PC-9 (cell line): ENCODE measurements at regions of chr12 and their contacts with region 1.

Region 1: GRCh38 chr12:120971299-120972179 is 6.8 kb upstream of the HNF1A start:
- DNase-seq: peak; percentile 27 to 58
- H3K4me3 ChIP-seq: no peak overlapping the region
- H3K27ac ChIP-seq: no peak overlapping the region
- H3K4me1 ChIP-seq: no peaks in the 10 kb centered on the region
- H3K27me3 ChIP-seq: no peaks in the 10 kb centered on the region
- CTCF ChIP-seq: peak; percentile 77

Region 2: DNA sequence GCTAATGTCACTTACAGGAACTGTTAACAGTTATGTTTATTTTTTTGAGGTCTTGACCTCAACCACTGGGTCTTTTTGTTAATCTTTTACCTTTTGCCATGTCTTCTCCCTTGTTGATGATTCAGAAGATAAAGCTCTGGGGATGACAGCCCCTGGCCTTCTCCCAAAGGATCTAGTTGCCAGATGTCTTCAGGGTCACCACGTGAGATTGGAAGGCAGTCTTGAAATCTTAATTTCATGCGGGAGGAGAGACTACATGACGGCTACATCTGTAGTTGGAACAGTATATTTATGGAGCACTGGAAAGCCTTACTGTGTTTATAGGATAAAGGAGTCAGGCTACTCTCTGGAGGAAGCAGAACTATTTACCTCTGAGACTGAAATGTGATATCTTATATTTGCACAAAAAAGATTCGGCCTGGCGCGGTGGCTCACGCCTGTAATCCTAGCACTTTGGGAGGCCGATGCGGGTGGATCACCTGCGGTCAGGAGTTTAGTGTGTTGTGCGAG is 279.0 kb before region 1 on chr12:
- CTCF ChIA-PET with region 1: no interaction called
- POLR2A ChIA-PET with region 1: no interaction called
- intact Hi-C with region 1: no loop called
- DNase-seq: no peak
- H3K4me3 ChIP-seq: no peak overlapping the region
- H3K27ac ChIP-seq: no peak overlapping the region
- H3K4me1 ChIP-seq: peaks cover 23% of the 10 kb centered on the region
- H3K27me3 ChIP-seq: no peaks in the 10 kb centered on the region
- CTCF ChIP-seq: no peak

Region 3: DNA sequence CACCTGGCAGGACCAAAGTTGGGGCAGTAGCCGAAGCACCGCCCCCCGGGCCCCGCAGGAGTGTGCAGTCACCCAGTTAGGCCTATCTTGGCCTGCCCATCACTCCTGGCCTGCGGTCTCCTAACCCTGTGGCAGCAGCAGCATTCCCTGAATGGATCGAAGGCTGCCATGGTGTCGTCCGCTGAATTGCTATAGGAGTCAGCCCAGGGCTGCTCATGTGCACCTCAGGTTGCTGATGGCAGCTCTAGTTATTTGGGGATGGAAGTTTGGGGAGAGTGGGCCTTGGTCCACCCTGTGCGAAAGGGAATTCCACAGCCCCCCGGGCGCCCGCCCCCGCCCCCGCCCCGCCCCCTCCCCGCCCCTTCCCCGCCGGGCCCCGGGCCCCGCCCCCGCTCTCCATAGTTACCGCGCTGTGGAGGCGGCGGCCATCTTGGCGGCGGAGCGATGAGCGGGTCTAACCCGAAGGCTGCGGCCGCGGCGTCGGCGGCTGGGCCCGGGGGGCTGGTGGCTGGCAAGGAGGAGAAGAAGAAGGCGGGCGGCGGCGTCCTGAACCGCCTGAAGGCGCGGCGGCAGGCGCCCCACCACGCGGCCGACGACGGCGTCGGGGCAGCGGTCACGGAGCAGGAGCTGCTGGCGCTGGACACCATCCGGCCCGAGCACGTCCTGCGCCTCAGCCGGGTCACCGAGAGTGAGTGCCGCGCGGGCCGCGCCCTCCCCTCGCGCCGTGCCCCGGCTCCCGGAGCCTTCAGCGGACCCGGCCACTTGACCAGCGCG is 261.3 kb before region 1 on chr12 and contains the start of gene UNC119B:
- CTCF ChIA-PET with region 1: no interaction called
- POLR2A ChIA-PET with region 1: no interaction called
- intact Hi-C with region 1: loop called (anchors 5 kb)
- DNase-seq: peak in 1 of 2 experiments; percentile 63
- H3K4me3 ChIP-seq: peak within 1 kb of the TSS; percentile 87
- H3K27ac ChIP-seq: no peak within 1 kb of the TSS; the same call in 1 of the 2 replicates
- H3K4me1 ChIP-seq: peaks cover 7% of the 10 kb centered on the region; the same call in 1 of the 2 replicates
- H3K27me3 ChIP-seq: no peaks in the 10 kb centered on the region
- CTCF ChIP-seq: no peak
- total RNA-seq, gene UNC119B: 25.9 and 30.2 TPM in 2 replicates

Region 4: GRCh38 chr12:120775862-120776552 is 195.5 kb before region 1 on chr12:
- CTCF ChIA-PET with region 1: no interaction called
- POLR2A ChIA-PET with region 1: interaction called, 5 read pairs
- intact Hi-C with region 1: loop called (anchors 5 kb)
- DNase-seq: no peak
- H3K4me3 ChIP-seq: no peak overlapping the region
- H3K27ac ChIP-seq: no peak overlapping the region
- H3K4me1 ChIP-seq: no peaks in the 10 kb centered on the region
- H3K27me3 ChIP-seq: no peaks in the 10 kb centered on the region
- CTCF ChIP-seq: 0 out of 2 replicates have a peak, but pooled peaks have one; percentile 19

Region 5: GRCh38 chr12:120856980-120857379 is 114.6 kb before region 1 on chr12:
- CTCF ChIA-PET with region 1: interaction called, 6 read pairs
- POLR2A ChIA-PET with region 1: no interaction called
- intact Hi-C with region 1: loop called (anchors 1 kb)
- DNase-seq: no peak
- H3K4me3 ChIP-seq: no peak overlapping the region
- H3K27ac ChIP-seq: no peak overlapping the region
- H3K4me1 ChIP-seq: no peaks in the 10 kb centered on the region
- H3K27me3 ChIP-seq: no peaks in the 10 kb centered on the region
- CTCF ChIP-seq: 0 out of 2 replicates have a peak, but pooled peaks have one; percentile 35

Region 6: GRCh38 chr12:120903411-120904196 is 67.9 kb before region 1 on chr12:
- CTCF ChIA-PET with region 1: interaction called, 6 read pairs
- POLR2A ChIA-PET with region 1: no interaction called
- intact Hi-C with region 1: loop called (anchors 1 kb)
- DNase-seq: peak; percentile 55 to 74
- H3K4me3 ChIP-seq: peak overlapping the region; percentile 93
- H3K27ac ChIP-seq: no peak overlapping the region
- H3K4me1 ChIP-seq: peaks cover 25% of the 10 kb centered on the region
- H3K27me3 ChIP-seq: no peaks in the 10 kb centered on the region
- CTCF ChIP-seq: no peak

Region 7: DNA sequence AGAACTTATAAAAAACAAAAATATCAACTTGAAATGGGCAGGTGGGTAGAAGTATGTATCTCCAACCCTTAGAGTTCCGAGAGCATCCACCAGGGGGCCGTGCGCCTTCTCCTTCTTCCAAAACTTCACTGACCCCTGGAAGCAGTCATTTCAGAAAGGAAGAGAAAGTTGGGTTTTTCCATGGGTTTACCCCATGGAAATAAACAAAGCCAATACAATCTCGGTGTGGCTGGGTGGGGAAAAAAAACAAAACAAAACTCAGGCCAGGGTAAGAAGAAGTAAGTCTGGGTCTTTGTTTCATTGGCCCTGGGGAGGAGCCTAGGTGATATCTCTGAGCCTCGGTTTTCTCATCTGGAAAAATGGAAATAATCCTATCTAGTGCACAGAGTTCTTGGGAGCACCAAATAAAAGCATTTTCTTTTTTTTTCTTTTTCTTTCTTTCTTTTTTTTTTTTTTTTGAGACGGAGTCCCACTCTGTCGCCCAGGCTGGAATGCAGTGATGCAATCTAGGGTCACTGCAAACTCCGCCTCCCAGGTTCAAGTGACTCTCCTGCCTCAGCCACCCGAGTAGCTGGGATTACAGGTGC is 26.8 kb before region 1 on chr12:
- CTCF ChIA-PET with region 1: interaction called, 10 read pairs
- POLR2A ChIA-PET with region 1: no interaction called
- intact Hi-C with region 1: no loop called
- DNase-seq: peak in 1 of 2 experiments; percentile 49
- H3K4me3 ChIP-seq: no peak overlapping the region
- H3K27ac ChIP-seq: no peak overlapping the region
- H3K4me1 ChIP-seq: no peaks in the 10 kb centered on the region
- H3K27me3 ChIP-seq: no peaks in the 10 kb centered on the region
- CTCF ChIP-seq: peak; percentile 87

Region 8: DNA sequence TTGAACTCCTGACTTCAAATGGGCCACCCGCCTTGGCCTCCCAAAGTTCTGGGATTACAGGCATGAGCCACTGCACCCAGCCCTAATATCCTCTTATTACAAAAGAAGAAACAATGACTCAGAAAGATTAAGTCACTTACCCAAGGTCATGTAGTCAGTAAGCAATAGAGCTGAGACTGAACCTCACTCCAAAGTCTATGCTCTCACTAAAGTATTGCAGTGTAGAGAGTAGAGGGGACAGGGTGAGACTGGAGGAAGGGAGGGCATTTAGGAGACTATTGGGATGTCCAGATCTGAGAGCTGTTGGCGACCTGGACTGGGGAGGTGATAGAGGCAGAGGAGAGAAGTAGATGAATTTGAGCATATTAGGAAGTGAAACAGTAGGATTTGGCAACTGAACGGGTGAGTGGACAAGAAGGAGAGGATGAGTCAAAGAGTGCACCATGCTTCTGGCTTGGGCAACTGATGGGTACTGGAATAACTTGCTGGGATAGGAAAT is 172.9 kb after region 1 on chr12:
- CTCF ChIA-PET with region 1: no interaction called
- POLR2A ChIA-PET with region 1: no interaction called
- intact Hi-C with region 1: no loop called
- DNase-seq: peak in 1 of 2 experiments; percentile 55
- H3K4me3 ChIP-seq: no peak overlapping the region
- H3K27ac ChIP-seq: peak overlapping the region; percentile 70
- H3K4me1 ChIP-seq: peaks cover 18% of the 10 kb centered on the region
- H3K27me3 ChIP-seq: no peaks in the 10 kb centered on the region
- CTCF ChIP-seq: no peak

Region 9: DNA sequence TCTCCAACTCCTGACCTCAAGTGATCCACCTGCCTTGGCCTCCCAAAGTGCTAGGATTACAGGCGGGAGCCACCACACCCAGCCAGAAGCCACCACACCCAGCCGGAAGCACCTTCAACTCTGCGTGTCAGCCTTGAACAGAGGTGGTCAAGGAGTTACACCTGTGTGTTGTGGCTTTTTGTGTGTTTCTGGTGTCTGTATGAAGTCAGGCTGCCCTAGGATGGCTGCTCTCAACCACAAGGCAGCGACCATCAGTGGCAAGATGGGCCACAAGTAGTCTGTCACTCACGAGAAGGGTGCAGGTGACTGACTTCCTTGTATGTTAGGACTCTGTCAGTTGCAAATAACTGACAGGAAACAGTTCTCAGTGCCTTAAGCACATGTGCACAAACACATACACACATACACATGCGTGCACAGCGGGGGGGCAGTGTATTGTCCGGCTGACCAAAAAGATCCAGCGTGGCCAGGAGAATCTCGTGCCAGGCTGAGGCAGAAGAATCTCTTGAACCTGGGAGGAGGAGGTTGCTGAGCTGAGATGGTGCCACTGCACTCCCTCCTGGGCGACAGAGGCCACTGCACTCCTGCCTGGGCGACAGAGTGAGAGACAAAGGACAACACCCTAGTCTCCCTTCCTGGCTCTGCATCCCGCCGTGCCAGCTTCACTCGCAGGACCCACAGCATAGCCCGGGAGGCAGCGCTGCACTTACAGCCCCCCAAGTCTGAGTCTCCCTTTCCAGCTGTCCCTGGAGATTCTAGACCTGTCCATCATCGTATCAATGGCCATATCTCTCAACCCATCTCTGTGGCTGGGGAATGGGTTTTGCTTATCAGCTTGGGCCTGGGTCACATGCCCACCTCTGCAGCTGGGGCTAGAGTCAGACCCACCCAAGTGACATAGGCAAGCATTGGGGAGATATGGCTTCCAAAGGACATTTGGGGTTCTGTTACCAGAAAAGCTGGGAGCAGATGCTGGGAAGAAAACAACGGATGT is 252.1 kb after region 1 on chr12:
- CTCF ChIA-PET with region 1: no interaction called
- POLR2A ChIA-PET with region 1: no interaction called
- intact Hi-C with region 1: no loop called
- DNase-seq: no peak
- H3K4me3 ChIP-seq: no peak overlapping the region
- H3K27ac ChIP-seq: no peak overlapping the region
- H3K4me1 ChIP-seq: peaks cover 27% of the 10 kb centered on the region
- H3K27me3 ChIP-seq: no peaks in the 10 kb centered on the region
- CTCF ChIP-seq: peak; percentile 47